Mammary epithelial cell (primary cell): ENCODE measurements at regions of chr11 and their contacts with region 1.

Region 1: DNA sequence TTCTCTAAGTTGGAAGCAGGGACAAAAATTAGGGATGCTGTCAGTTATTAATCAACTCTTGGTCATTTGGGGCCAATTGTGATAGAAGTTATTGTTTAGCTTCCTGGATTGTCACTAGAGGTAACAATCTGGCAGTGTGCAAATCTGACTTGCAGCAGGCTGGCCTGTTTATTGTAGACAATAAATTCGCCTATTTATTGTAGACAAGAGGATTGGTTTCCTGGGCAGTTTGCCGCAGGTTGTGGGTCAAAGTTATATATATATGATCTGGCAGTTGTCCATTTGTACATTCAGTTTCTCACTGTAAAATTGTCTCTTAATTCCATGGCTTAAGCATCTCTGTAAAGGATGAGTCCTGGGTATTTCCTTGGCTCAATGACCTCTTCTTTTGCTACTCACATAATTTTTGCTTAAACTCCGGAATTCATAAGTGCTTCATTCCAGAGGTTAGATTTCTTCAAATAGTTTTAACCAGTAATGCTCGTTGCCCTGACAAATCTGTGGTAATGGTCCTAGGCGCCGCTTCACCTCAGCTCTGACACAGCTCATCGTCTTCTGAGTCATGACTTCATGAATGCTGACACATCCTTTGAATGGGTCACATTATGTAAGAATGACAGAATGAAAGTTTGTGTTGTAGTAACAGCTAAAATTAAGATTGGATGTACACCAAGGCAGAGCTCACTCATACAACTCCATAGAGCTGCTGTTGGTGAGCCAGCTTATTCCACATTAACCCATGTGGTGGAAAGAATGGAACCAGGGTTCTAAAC is 7.8 kb upstream of the MMP3 start:
- DNase-seq: peak; percentile 92
- H3K4me3 ChIP-seq: no peak overlapping the region
- H3K27ac ChIP-seq: peak overlapping the region; percentile 84
- H3K4me1 ChIP-seq: peaks cover 51% of the 10 kb centered on the region
- H3K27me3 ChIP-seq: no peaks in the 10 kb centered on the region
- CTCF ChIP-seq: no peak

Region 2: GRCh38 chr11:102760355-102761035 is 90.7 kb before region 1 on chr11:
- CTCF ChIA-PET with region 1: no interaction called
- dilution Hi-C with region 1: no loop called
- in situ Hi-C with region 1: no loop called
- intact Hi-C with region 1: loop called (anchors 2 kb)
- DNase-seq: peak; percentile 97
- H3K4me3 ChIP-seq: no peak overlapping the region
- H3K27ac ChIP-seq: peak overlapping the region; percentile 83
- H3K4me1 ChIP-seq: peaks cover 37% of the 10 kb centered on the region
- H3K27me3 ChIP-seq: no peaks in the 10 kb centered on the region
- CTCF ChIP-seq: no peak

Region 3: GRCh38 chr11:102780491-102780918 is 70.7 kb before region 1 on chr11 and contains the start of gene MMP10:
- CTCF ChIA-PET with region 1: no interaction called
- dilution Hi-C with region 1: loop called (anchors 5 kb)
- in situ Hi-C with region 1: no loop called
- intact Hi-C with region 1: no loop called
- DNase-seq: peak; percentile 88
- H3K4me3 ChIP-seq: no peak within 1 kb of the TSS
- H3K27ac ChIP-seq: no peak within 1 kb of the TSS
- H3K4me1 ChIP-seq: peaks cover 26% of the 10 kb centered on the region
- H3K27me3 ChIP-seq: no peaks in the 10 kb centered on the region
- CTCF ChIP-seq: peak; percentile 71 to 76
- total RNA-seq, gene MMP10: 2.5 to 30.6 TPM

Region 4: GRCh38 chr11:102802341-102802740 is 48.8 kb before region 1 on chr11:
- CTCF ChIA-PET with region 1: no interaction called
- dilution Hi-C with region 1: no loop called
- in situ Hi-C with region 1: no loop called
- intact Hi-C with region 1: no loop called
- DNase-seq: peak; percentile 25
- H3K4me3 ChIP-seq: no peak overlapping the region
- H3K27ac ChIP-seq: no peak overlapping the region
- H3K4me1 ChIP-seq: peaks cover 11% of the 10 kb centered on the region
- H3K27me3 ChIP-seq: no peaks in the 10 kb centered on the region
- CTCF ChIP-seq: no peak

Region 5: GRCh38 chr11:102891736-102892135 is 40.6 kb after region 1 on chr11:
- CTCF ChIA-PET with region 1: no interaction called
- dilution Hi-C with region 1: loop called (anchors 5 kb)
- in situ Hi-C with region 1: no loop called
- intact Hi-C with region 1: no loop called
- DNase-seq: no peak
- H3K4me3 ChIP-seq: no peak overlapping the region
- H3K27ac ChIP-seq: no peak overlapping the region
- H3K4me1 ChIP-seq: peaks cover 10% of the 10 kb centered on the region
- H3K27me3 ChIP-seq: no peaks in the 10 kb centered on the region
- CTCF ChIP-seq: no peak

Region 6: DNA sequence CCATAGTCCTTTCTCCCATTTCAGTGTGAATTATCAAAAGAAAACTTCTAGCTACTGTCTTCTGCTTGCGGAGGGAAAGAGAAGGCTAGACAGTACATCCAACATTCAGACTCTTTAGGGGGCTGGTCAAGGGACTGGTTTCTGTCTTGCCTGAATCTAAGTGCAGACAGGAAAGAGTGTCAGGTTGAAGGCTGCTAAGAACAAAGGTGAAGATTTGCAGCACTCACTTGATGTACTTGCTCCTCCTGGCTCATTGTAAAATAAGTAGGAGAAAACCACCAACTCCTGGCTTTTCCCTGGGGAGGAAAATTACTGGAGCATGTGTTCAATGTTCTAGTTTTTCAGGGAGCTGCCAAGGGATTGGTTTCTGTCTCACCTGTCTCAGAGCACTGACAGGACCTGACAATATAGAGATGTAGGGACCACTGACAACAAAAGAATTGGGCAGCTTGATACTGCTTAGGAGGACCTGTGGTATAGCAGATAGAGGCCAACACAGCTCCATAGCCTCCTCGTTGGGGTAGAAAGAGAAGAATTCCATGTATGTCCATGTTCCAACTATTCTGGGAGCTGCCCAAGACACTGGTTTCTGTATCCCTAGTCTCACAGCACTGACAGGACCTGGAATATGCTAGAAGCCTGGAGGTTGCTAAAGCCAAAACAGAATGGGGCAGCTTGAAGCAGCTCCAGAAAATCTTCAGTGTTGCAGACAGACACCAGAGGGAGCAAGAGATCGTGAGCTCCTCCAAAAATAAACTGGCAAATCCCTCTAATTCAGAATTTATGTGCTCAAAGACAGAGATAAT is 63.3 kb after region 1 on chr11:
- CTCF ChIA-PET with region 1: no interaction called
- dilution Hi-C with region 1: no loop called
- in situ Hi-C with region 1: no loop called
- intact Hi-C with region 1: loop called (anchors 5 kb)
- DNase-seq: peak; percentile 28
- H3K4me3 ChIP-seq: no peak overlapping the region
- H3K27ac ChIP-seq: no peak overlapping the region
- H3K4me1 ChIP-seq: peaks cover 13% of the 10 kb centered on the region
- H3K27me3 ChIP-seq: no peaks in the 10 kb centered on the region
- CTCF ChIP-seq: peak; percentile 74 to 85